ENCODE measurements at regions of chr5 and their contacts with region 1.

Region 1: GRCh38 chr5:115098041-115098702 is 71.5 kb downstream of the TRIM36 start:
- DNase-seq: no peak
- H3K4me3 ChIP-seq: no peak overlapping the region
- H3K27ac ChIP-seq: no peak overlapping the region
- H3K4me1 ChIP-seq: peaks cover 0 to 6% (median 0%) of the 10 kb centered on the region in 4 donors
- H3K27me3 ChIP-seq: no peaks in the 10 kb centered on the region
- CTCF ChIP-seq: peak in 2 of 4 experiments; percentile 44 to 51
- EP300 ChIP-seq: no peak
- POLR2A ChIP-seq: no peak

Region 2: GRCh38 chr5:114969490-114969889 is 128.7 kb before region 1 on chr5:
- intact Hi-C with region 1: no loop called
- DNase-seq: no peak
- H3K4me3 ChIP-seq: no peak overlapping the region
- H3K27ac ChIP-seq: no peak overlapping the region
- H3K4me1 ChIP-seq: no peaks in the 10 kb centered on the region
- H3K27me3 ChIP-seq: no peaks in the 10 kb centered on the region
- CTCF ChIP-seq: no peak
- EP300 ChIP-seq: no peak
- POLR2A ChIP-seq: no peak

Region 3: GRCh38 chr5:115136294-115136693 is 38.1 kb after region 1 on chr5:
- intact Hi-C with region 1: no loop called
- DNase-seq: no peak
- H3K4me3 ChIP-seq: no peak overlapping the region
- H3K27ac ChIP-seq: no peak overlapping the region
- H3K4me1 ChIP-seq: no peaks in the 10 kb centered on the region
- H3K27me3 ChIP-seq: no peaks in the 10 kb centered on the region
- CTCF ChIP-seq: no peak
- EP300 ChIP-seq: no peak
- POLR2A ChIP-seq: no peak

Region 4: DNA sequence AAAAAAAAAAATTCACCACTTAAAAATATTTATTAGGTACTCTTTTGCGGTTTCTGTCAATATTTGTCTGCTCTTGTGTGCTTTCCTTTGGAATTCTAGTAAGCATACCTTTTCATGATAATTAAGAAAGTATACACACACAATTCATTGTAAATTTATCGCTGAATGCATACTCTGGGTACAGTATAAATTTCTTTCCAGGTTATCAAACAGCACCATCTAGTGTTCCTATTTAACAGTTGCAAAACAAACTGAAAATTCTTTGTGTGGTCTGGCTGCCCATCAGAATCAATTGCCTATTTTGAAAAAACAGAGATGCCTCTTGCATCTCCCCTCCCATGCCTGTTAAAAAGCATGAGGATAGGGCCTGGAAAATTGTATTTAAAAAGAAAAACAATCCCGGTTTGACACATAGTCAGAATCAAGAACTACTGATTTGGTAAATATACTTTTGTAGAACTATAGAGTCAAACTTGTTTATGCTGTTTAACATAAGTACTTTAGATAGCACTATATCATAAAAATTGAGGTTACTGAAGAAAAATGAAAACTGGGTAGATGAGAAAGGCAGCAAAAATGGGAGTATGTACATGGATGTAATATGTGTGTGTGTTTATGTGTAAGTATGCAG is 148.3 kb after region 1 on chr5:
- intact Hi-C with region 1: loop called (anchors 5 kb)
- DNase-seq: no peak
- H3K4me3 ChIP-seq: no peak overlapping the region
- H3K27ac ChIP-seq: no peak overlapping the region
- H3K4me1 ChIP-seq: peaks cover 0 to 16% (median 3%) of the 10 kb centered on the region in 4 donors
- H3K27me3 ChIP-seq: no peaks in the 10 kb centered on the region
- CTCF ChIP-seq: peak; percentile 18 to 66 (median 44)
- EP300 ChIP-seq: no peak
- POLR2A ChIP-seq: no peak